ENCODE measurements at regions of chr10 and their contacts with region 1.

Region 1: GRCh38 chr10:3776796-3777571 is 8.0 kb downstream of the KLF6 start:
- DNase-seq: peak; percentile 39 to 53
- ATAC-seq: peak; percentile 24 to 29
- H3K4me3 ChIP-seq: peak overlapping the region in 2 of 4 donors; percentile 83 to 89
- H3K27ac ChIP-seq: peak overlapping the region; percentile 97 to 100 (median 98)
- H3K4me1 ChIP-seq: peaks cover 69 to 75% of the 10 kb centered on the region in 2 donors
- H3K27me3 ChIP-seq: no peaks in the 10 kb centered on the region
- CTCF ChIP-seq: no peak
- POLR2A ChIP-seq: peak; percentile 8 to 48

Region 2: GRCh38 chr10:3239066-3239919 is 537.7 kb before region 1 on chr10:
- in situ Hi-C with region 1: no loop called
- intact Hi-C with region 1: loop called (anchors 5 kb)
- DNase-seq: peak; percentile 38 to 46
- ATAC-seq: peak; percentile 80 to 90
- H3K4me3 ChIP-seq: no peak overlapping the region
- H3K27ac ChIP-seq: peak overlapping the region in 3 of 4 donors; percentile 56 to 66 (median 59)
- H3K4me1 ChIP-seq: no peaks in the 10 kb centered on the region
- H3K27me3 ChIP-seq: no peaks in the 10 kb centered on the region
- CTCF ChIP-seq: peak; percentile 78 to 91 (median 86)
- POLR2A ChIP-seq: no peak

Region 3: DNA sequence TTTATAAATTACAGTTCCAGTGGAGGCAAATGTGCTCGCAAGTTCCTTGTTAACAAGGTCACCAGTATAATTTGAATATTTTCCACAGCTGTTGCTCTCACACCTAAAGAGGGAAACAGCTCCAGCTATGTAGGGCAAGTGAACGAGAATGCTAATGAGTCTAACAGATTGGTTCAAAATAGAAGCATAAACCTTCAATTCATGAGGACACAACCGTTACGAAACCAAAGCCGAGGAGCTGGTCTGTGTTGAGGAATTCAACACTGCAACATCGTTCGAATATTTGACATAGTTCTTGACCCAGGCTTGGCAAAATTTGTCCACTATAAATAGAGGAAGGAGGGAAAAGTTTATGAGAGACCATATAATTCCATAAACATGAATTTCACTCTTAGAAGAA is 153.2 kb before region 1 on chr10:
- in situ Hi-C with region 1: no loop called
- intact Hi-C with region 1: loop called (anchors 10 kb)
- DNase-seq: no peak
- ATAC-seq: peak; percentile 61 to 74
- H3K4me3 ChIP-seq: peak overlapping the region in 3 of 4 donors; percentile 7 to 21 (median 9)
- H3K27ac ChIP-seq: peak overlapping the region; percentile 39 to 55 (median 49)
- H3K4me1 ChIP-seq: peaks cover 11 to 22% of the 10 kb centered on the region in 2 donors
- H3K27me3 ChIP-seq: no peaks in the 10 kb centered on the region
- CTCF ChIP-seq: no peak
- POLR2A ChIP-seq: no peak

Region 4: DNA sequence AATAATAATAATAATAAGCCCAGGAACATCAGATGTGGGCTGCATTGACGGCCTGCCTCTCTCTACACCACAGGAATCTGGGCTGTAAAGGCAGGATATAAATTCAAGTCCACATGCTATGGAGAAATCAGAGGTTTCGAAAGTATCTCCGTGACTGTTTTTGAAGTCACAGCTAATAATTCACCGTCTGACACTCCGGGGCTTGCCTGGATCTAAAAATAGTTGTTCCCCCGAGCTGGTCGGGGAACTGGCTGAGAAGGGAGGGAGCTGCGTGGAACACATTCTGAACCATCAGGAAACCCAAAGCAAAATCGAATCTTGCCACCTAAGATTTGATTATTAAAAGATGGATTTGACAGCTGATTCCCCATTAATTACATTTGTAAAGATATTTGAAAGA is 27.4 kb before region 1 on chr10:
- in situ Hi-C with region 1: no loop called
- intact Hi-C with region 1: loop called (anchors 1 kb)
- DNase-seq: peak; percentile 82 to 87
- ATAC-seq: peak; percentile 92 to 94
- H3K4me3 ChIP-seq: peak overlapping the region; percentile 13 to 60 (median 42)
- H3K27ac ChIP-seq: peak overlapping the region; percentile 73 to 93 (median 90)
- H3K4me1 ChIP-seq: peaks cover 34 to 41% of the 10 kb centered on the region in 2 donors
- H3K27me3 ChIP-seq: no peaks in the 10 kb centered on the region
- CTCF ChIP-seq: no peak
- POLR2A ChIP-seq: peak; percentile 88

Measured in gastrocnemius medialis (tissue), 4 donors.